ENCODE measurements at regions of chr1 and their contacts with region 1.

Region 1: DNA sequence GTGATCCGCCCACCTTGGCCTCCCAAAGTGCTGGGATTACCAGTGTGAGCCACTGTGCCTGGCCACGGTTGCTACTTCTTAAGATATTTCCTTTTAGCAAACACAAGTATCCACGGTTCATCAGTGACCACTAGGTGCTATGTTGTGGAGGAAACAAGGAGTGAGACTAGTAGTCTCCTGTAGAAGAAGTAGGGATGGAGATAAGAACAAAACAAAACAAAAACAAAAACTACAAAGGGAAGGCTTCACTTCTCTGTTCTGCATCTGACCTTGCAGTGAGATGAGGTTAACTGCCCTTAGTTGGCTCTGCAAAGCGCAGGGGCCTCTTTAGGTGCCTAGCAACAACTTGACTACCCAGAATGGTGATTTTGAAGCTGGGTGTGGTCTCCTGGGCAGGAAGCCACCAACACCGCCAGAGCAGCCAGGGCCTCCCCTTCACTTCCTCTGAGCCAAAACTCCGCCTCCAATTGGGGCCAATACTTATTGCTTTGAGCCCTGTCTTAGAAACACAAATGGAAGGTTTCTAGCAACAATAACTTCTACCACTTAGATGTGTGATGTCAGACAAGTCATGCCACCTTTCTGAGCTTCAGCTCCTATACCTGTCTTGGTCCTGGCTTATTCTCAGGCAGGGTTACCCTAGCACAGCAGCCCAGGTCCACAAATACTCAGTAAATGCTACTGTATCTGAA is 12.8 kb upstream of the CDC42 start:
- DNase-seq: peak; percentile 62
- ATAC-seq: peak; percentile 98
- H3K4me3 Mint-ChIP-seq: peak overlapping the region; percentile 76
- H3K27ac Mint-ChIP-seq: peak overlapping the region; percentile 95
- H3K4me1 Mint-ChIP-seq: peaks cover 53% of the 10 kb centered on the region
- H3K27me3 Mint-ChIP-seq: no peaks in the 10 kb centered on the region
- CTCF ChIP-seq: no peak

Region 2: GRCh38 chr1:22117238-22117637 is 77.5 kb after region 1 on chr1:
- CTCF ChIA-PET with region 1: no interaction called
- POLR2A ChIA-PET with region 1: interaction called, 10 read pairs
- intact Hi-C with region 1: no loop called
- DNase-seq: no peak
- ATAC-seq: no peak
- H3K4me3 Mint-ChIP-seq: no peak overlapping the region
- H3K27ac Mint-ChIP-seq: peak overlapping the region; percentile 82
- H3K4me1 Mint-ChIP-seq: peaks cover 70% of the 10 kb centered on the region
- H3K27me3 Mint-ChIP-seq: no peaks in the 10 kb centered on the region
- CTCF ChIP-seq: no peak

Region 3: DNA sequence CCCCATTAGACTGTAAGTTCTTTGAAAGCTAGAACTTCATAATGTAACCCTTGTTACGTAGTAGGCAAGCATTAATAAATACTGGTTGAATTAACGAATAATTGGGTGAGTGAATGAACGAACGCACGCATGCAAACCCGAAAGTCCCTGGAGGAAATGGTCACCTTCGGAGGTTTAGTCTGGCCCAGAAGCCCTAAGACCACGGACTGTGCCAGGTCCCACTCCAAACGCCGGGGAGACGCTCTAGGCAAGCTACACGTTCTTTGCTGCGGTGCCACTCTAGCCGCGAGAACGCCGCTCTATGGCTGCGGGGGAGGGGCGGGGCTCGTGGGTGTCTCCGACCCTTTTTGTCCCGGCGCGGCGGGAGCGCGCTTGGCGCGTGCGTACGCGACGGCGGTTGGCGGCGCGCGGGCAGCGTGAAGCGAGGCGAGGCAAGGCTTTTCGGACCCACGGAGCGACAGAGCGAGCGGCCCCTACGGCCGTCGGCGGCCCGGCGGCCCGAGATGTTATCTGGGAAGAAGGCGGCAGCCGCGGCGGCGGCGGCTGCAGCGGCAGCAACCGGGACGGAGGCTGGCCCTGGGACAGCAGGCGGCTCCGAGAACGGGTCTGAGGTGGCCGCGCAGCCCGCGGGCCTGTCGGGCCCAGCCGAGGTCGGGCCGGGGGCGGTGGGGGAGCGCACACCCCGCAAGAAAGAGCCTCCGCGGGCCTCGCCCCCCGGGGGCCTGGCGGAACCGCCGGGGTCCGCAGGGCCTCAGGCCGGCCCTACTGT is 979.5 kb after region 1 on chr1 and contains the start of gene KDM1A:
- CTCF ChIA-PET with region 1: no interaction called
- POLR2A ChIA-PET with region 1: no interaction called
- intact Hi-C with region 1: no loop called
- DNase-seq: peak; percentile 96
- ATAC-seq: peak; percentile 98
- H3K4me3 Mint-ChIP-seq: peak within 1 kb of the TSS; percentile 93
- H3K27ac Mint-ChIP-seq: peak within 1 kb of the TSS; percentile 84
- H3K4me1 Mint-ChIP-seq: peaks cover 38% of the 10 kb centered on the region
- H3K27me3 Mint-ChIP-seq: no peaks in the 10 kb centered on the region
- CTCF ChIP-seq: no peak
- total RNA-seq, gene KDM1A: 40.7 and 41.5 TPM in 2 replicates